AG04449 (cell line): ENCODE measurements at regions of chr9 and their contacts with region 1.

Region 1: DNA sequence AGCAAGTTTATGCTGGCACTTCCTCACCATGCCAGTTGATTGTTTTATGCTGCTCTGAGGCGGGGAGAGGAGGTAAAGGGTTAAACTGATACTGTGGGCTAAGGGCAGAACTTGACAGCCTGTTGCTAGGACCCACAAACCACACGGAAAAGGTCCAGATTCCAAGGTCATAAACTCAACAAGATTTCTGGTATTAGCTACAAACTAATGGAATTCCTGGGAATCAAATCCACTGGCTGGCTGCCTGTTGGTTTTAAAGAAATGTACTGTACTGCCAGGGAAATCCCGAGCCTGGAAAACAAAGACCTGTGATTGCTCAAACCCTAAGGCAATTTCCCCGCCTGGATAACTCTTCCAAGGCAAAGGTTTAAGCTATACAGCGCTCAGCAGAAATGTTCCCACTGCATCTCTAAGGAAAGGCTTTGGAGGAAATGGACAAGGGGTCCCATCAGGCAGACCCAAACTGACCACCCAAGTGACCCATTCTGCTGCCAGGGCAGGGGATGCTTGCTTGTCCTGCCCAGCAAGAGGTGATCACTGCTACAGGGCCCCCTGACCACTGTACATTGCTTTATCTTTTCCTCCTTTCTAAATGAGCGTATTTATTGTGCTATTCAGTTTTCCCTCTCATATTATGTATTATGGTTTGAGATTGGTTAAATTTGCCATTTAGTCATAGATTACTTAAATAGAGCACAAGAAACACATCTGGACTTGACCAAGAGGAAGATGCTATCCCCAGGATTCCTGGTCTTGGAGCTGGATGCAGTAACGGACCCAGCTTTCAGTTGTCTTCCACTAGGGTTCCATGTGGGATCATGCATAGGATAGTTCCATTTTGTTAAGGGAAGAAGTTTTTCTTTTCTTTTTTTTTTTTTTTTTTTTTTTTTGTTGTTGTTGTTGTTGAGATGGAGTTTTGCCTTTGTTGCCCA is 124.3 kb downstream of the SUSD1 start:
- DNase-seq: peak; percentile 93
- H3K4me3 ChIP-seq: no peak overlapping the region
- CTCF ChIP-seq: no peak

Region 2: DNA sequence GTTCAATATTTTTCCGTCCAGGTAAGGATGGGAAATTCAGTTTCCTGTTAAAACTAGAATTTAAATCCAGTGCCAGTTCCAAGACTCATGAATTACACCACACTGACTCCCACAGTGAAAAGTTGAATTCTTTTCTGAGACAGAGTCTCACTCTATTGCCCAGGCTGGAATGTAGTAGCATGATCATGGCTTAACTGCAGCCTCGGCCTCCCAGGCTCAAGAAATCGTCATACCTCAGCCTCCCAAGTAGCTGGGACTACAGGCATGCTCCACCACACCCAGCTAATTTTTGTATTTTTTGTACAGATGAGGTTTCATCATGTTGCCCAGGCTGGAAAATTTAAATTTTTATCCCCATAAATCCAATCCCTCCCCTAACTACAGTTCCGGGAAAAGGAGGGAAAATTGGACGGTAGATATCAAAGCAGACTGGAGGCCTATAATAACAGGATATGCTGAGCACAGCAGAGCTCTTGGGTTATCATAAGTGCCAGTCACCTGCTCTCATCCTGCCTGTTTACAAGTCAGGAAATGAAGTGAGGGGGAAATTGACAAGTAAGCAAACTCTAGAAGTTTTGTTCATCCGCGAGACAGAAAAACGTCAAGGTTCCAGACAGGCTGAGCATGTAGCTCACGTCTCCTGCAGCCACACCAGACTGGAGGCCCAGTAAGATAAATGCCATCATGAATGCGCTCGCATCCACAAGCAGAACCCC is 48.5 kb before region 1 on chr9:
- CTCF ChIA-PET with region 1: no interaction called
- POLR2A ChIA-PET with region 1: no interaction called
- DNase-seq: no peak
- H3K4me3 ChIP-seq: no peak overlapping the region
- CTCF ChIP-seq: no peak

Region 3: DNA sequence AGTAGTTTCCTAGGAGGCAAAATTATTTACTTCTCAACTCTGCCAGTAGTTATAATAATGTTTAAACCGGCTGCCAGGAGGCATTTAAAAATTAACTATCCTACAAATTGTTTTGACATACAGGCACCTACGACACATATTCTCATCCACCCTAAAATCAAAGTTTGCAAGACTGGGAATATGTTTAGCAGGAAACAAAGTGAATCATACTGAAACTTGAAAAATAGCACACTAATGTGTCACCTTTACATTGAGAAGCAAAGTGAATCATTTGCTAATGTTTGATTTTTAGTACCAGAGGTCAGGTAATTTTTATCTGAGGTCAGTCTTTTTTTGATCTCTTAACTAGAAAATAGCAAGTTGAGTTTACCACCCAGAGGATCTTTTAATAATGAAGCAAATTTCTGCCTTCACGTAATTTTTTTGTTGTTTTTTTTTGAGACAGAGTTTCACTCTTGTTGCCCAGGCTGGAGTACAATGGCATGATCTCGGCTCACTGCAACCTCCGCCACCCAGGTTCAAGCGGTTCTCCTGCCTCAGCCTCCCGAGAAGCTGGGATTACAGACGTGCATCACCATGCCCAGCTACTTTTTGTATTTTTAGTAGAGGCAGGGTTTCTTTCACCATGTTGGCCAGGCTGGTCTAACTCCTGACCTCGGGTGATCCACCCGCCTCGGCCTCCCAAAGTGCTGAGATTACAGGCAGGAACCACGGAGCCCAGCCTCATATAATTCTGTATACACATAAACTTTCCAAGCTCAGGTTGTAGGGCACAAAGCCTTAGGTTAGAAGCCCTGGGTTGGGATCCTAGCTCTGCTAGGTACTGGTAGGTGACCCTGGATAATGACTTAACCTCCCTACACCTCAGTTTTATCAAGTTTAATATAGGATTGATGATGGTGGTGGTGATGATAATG is 29.9 kb before region 1 on chr9:
- CTCF ChIA-PET with region 1: no interaction called
- POLR2A ChIA-PET with region 1: no interaction called
- DNase-seq: no peak
- H3K4me3 ChIP-seq: no peak overlapping the region
- CTCF ChIP-seq: no peak

Region 4: GRCh38 chr9:112061152-112061740 is 10.4 kb after region 1 on chr9:
- CTCF ChIA-PET with region 1: interaction called, 12 read pairs
- POLR2A ChIA-PET with region 1: interaction called, 12 read pairs
- DNase-seq: peak; percentile 91
- H3K4me3 ChIP-seq: no peak overlapping the region
- CTCF ChIP-seq: no peak

Region 5: DNA sequence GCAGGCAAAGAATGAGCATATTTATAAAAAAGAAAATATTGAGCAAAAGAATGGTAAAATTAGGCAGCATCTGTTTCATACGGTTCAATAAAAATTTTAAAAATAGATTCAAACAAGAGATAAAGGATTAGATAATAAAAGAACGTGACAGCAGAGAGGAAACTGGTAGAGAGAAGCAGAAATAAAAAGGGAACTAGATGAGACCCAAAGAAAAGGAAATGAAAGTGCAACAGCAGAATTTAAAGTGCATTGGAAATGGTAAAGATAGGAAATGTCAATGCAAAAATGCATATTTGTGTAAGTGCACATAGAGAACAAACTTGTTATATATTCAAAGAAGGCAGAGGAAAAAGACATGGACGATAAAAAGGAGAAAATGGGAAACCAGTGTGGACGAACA is 54.1 kb after region 1 on chr9:
- CTCF ChIA-PET with region 1: no interaction called
- POLR2A ChIA-PET with region 1: no interaction called
- DNase-seq: no peak
- H3K4me3 ChIP-seq: no peak overlapping the region
- CTCF ChIP-seq: no peak

Region 6: DNA sequence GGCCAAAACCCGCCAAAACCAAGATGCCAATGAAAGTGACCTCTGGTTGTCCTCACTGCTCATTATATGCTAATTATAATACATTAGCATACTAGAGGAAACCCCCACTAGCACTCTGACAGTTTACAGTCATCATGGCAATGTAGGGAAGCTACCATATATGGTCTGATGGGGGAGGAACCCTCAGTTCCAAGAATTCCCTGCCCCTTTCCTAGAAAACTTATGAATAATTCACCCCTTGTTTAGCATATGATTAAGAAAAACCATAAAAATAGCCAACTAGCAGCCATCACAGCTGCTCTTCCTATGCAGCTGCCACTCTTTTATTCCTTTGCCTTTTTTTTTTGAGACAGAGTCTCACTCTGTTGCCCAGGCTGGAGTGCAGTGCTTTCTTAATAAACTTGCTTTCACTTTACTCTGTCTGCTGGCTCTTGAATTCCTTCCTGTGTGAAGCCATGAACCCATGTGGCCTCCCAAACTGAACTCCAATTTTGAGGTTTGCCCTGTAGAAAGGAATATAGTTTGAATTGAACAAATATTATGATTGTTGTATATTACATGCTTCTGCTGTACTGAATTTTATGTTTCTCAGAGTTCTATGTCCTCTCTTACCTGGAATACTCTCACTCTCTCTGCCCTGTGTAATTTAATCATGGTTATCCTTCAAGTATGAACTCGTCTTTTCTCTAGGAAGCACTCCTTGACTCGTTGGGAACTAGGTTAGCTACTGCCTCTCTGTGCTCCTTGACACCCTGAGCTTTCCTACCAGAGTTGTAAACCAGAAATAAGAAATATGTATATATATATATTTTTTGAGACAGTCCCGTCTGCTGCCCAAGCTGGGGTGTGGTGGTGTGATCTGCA is 495.6 kb after region 1 on chr9:
- CTCF ChIA-PET with region 1: no interaction called
- POLR2A ChIA-PET with region 1: no interaction called
- DNase-seq: no peak
- H3K4me3 ChIP-seq: no peak overlapping the region
- CTCF ChIP-seq: no peak